ENCODE measurements at regions of chr2 and their contacts with region 1.

Region 1: GRCh38 chr2:46699934-46700256 is 215.7 kb downstream of the MCFD2 start:
- DNase-seq: no peak
- ATAC-seq: no peak
- H3K4me3 ChIP-seq: peak overlapping the region; percentile 62 to 94 (median 84)
- H3K27ac ChIP-seq: peak overlapping the region; percentile 88 to 97 (median 94)
- H3K4me1 ChIP-seq: peaks cover 0 to 55% (median 37%) of the 10 kb centered on the region in 12 donors
- H3K27me3 ChIP-seq: no peaks in the 10 kb centered on the region
- CTCF ChIP-seq: no peak
- POLR2A ChIP-seq: no peak

Region 2: DNA sequence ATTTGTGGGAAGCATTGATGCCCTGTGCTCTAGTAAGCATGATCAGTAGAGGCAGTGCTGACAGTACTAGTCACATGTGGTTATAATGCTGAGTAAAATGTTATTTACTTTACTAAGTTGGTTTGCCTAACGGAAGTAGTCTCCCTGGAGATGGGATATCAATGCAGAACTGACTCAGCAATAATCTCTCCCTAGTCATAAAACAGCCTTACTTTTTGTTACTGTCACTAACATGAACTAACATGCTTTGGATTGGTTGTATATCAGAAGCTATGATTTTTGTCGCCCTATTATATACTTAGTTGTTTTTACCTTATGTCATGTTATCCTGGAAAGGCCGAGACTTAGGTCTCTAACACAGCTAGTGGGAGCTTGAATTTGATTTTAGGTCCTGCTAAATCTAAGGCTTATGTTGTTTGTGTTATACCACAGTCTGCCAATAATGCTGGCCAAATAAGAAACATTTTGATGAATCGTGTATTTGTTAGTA is 49.2 kb after region 1 on chr2:
- intact Hi-C with region 1: loop called in 4 of 10 experiments (anchors 5 kb)
- DNase-seq: no peak
- ATAC-seq: peak in 3 of 4 donors; percentile 39 to 62 (median 51)
- H3K4me3 ChIP-seq: no peak overlapping the region
- H3K27ac ChIP-seq: peak overlapping the region in 1 of 12 donors; percentile 17
- H3K4me1 ChIP-seq: peaks cover 5 to 64% (median 44%) of the 10 kb centered on the region in 12 donors
- H3K27me3 ChIP-seq: no peaks in the 10 kb centered on the region
- CTCF ChIP-seq: no peak
- POLR2A ChIP-seq: no peak

Region 3: DNA sequence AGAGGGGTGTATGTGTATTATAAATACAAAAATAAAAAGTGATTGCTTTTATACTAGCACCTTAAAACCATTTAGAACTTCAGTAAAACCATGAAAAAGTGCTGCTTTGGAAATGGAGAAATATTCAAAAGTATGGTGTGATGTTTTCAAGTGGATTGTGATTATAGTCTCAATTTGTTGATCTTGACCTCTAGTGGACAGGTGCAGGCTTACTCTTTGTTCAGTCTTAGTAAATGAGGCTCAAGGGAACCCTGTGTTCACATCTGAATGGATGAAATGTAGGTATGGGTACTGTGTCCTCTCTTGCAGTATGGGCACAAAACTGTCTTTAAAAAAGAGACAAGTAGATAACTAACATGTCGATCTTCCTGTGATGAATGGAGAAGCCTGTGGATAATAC is 69.9 kb after region 1 on chr2:
- intact Hi-C with region 1: loop called in 4 of 10 experiments (anchors 10 kb)
- DNase-seq: no peak
- ATAC-seq: no peak
- H3K4me3 ChIP-seq: no peak overlapping the region
- H3K27ac ChIP-seq: no peak overlapping the region
- H3K4me1 ChIP-seq: peaks cover 0 to 5% (median 0%) of the 10 kb centered on the region in 12 donors
- H3K27me3 ChIP-seq: no peaks in the 10 kb centered on the region
- CTCF ChIP-seq: no peak
- POLR2A ChIP-seq: no peak

Region 4: DNA sequence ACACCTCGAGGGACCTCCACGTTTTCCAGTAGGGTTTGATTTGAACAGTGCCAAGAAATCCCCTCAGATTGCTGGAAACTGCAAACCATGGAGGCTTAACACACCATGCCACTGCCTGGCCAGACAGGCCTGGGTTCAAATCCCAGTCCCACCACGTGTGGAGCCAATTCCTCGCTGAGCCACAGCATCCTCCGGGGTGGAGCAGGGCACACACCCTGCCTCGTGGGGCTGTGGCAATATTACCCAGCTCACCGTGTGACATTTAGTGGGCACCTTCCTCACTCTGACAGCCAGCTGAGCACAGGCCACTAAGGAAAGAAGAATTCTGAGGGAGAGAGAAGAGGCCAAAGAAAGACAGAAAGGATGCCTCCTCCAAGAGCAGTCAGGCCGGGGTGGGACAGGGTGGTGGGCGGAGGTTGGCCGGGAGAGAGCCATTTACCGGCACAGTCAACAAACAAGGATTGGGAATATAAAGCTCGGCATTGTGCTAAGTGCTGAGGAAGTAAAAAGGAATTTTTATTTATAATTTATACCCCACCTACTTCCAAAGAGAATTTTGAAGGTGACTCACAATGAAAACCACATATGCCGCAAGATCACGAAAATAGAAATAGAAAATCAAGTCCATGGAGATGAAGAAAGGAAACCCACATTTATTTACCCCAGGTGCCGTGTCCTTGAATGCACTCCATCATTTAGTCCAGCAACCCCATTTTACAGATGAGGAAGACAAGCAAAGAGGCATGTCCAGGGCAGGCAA is 104.2 kb after region 1 on chr2:
- intact Hi-C with region 1: no loop called
- DNase-seq: no peak
- ATAC-seq: peak in 3 of 4 donors; percentile 8 to 40 (median 23)
- H3K4me3 ChIP-seq: no peak overlapping the region
- H3K27ac ChIP-seq: peak overlapping the region in 7 of 12 donors; percentile 22 to 69 (median 49)
- H3K4me1 ChIP-seq: peaks cover 0 to 33% (median 11%) of the 10 kb centered on the region in 12 donors
- H3K27me3 ChIP-seq: no peaks in the 10 kb centered on the region
- CTCF ChIP-seq: no peak
- POLR2A ChIP-seq: no peak